Activated CD8-positive, alpha-beta T cell treated with anti-CD3 and anti-CD28 coated beads, Interleukin-2, amount 10 ng/mL, durations not matched to agents 7 days and 5 days (primary cell): ENCODE measurements at regions of chr16 and their contacts with region 1.

Region 1: DNA sequence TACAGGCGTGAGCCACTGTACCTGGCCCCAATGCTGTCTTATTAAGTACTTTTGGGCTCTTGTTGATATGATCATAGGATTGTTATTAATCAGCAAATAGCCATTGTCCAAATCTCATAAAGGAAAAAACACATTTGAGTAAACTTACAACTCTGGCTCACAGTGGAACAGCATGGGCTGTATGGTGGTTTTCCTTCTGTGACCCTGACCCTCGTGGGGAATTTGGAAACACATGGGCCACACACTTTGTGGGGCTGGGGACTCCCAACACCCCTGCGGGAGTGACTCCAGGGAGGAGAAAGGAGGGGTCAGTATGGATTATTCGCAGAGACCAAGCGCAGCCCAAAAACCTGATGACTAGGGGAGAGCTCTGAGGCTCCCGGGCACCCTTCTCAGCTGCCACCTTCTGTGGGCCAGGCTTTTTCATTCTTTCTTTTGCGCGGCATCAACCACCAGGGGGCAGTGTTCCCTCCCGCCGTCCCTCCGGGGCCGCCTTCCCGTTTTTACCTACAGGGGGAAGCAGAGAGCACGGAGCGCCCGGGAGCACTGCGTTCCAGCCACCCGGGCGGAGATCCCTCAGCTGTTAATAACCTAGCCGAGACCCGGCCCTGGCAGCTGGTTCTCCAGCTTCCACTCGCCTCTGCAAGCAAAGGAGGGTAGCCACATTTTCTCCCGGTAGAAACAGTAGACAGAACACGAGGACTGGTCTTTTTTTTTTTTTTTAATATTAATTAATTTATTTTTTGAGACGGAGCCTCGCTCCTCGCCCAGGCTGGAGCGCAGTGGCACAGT is 9.7 kb downstream of the TSNAXIP1 start:
- DNase-seq: peak; percentile 93
- ATAC-seq: peak; percentile 96
- H3K4me3 Mint-ChIP-seq: no peak overlapping the region
- H3K27ac Mint-ChIP-seq: peak overlapping the region; percentile 20
- H3K4me1 Mint-ChIP-seq: peaks cover 7% of the 10 kb centered on the region
- H3K27me3 Mint-ChIP-seq: peaks cover 5% of the 10 kb centered on the region

Region 2: DNA sequence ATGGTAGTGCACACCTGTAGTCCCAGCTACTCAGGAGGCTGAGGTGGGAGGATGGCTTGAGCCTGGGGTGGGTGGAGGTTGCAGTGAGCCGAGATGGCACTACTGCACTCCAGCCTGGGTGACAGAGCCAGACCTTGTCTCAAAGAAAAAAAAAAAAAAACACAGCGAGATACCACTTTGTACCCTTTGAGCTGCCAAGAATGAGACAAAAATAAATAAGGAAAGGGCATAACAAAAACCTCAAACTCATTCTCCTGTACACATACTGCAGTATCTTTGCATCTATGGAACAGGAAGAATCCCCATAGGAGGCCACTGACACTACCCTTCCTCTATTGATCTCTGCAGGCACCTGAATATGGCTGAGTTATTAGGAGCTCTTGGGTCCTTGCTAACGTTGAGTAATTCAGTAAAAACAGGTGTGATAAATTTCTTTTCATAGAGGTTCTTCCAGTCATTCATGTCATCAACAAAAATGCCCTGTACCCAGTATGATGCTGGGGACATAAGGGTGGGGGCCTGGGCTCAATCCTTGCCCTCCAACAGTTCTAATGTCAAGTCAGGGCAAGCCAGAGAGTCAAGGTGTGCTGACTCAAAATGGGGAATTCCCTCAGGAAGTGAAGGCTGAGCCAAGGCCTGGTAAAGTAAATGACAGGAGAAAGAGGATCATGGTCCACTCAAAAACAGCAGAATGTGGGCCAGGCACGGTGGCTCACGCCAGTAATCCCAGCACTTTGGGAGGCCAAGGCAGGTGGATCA is 37.0 kb before region 1 on chr16:
- CTCF ChIA-PET with region 1: interaction called, 10 read pairs
- POLR2A ChIA-PET with region 1: no interaction called
- DNase-seq: no peak
- ATAC-seq: no peak
- H3K4me3 Mint-ChIP-seq: no peak overlapping the region
- H3K27ac Mint-ChIP-seq: peak overlapping the region; percentile 13
- H3K4me1 Mint-ChIP-seq: peaks cover 25% of the 10 kb centered on the region
- H3K27me3 Mint-ChIP-seq: no peaks in the 10 kb centered on the region

Region 3: GRCh38 chr16:67841764-67842508 is 25.5 kb after region 1 on chr16 and contains the start of gene THAP11:
- CTCF ChIA-PET with region 1: interaction called, 40 read pairs
- POLR2A ChIA-PET with region 1: no interaction called
- DNase-seq: peak; percentile 97
- ATAC-seq: peak; percentile 59
- H3K4me3 Mint-ChIP-seq: peak within 1 kb of the TSS; percentile 96
- H3K27ac Mint-ChIP-seq: peak within 1 kb of the TSS; percentile 98
- H3K4me1 Mint-ChIP-seq: peaks cover 38% of the 10 kb centered on the region
- H3K27me3 Mint-ChIP-seq: no peaks in the 10 kb centered on the region
- total RNA-seq, gene THAP11: 50.2 to 52.4 TPM

Region 4: DNA sequence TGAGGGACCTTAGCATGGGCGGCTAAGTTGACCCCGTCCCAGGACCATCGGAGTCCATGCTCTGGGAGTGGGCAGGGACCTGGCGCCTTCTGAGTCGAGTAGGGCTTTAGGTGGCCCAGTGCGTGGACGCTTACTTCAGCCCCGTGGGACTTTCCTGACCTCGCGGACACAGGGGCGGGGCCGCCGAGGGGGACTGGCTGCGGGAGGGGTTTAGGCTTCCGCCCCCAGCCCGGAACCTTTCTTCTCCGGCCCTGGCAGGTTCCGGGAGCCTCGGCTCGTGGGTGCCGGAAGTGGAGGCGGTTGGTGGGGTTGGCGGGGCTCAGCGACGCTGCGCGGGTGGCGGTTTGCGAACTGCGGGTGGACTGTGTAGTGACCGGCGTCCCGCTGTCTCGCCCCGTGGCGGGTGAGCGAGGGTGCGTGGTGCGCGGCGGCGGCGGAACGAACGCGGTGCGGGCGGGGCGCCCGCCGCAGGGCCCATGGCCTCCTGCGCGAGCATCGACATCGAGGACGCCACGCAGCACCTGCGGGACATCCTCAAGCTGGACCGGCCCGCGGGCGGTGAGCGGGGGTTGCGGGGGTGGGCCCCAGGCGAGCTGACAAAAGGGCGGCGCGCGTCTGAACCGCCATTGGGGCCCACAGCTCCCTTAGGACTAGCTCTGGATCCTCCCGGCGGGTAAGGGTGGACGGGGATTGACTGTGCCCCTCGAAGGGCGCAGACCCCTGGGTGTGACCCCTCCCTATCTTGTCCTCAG is 56.5 kb after region 1 on chr16 and contains the start of gene EDC4:
- CTCF ChIA-PET with region 1: interaction called, 16 read pairs
- POLR2A ChIA-PET with region 1: no interaction called
- DNase-seq: peak; percentile 88
- ATAC-seq: peak; percentile 91
- H3K4me3 Mint-ChIP-seq: peak within 1 kb of the TSS; percentile 89
- H3K27ac Mint-ChIP-seq: peak within 1 kb of the TSS; percentile 92
- H3K4me1 Mint-ChIP-seq: peaks cover 31% of the 10 kb centered on the region
- H3K27me3 Mint-ChIP-seq: no peaks in the 10 kb centered on the region
- total RNA-seq, gene EDC4: 111 to 113 TPM

Region 5: GRCh38 chr16:67917852-67918236 is 101.4 kb after region 1 on chr16:
- CTCF ChIA-PET with region 1: interaction called, 21 read pairs
- POLR2A ChIA-PET with region 1: interaction called, 4 read pairs
- DNase-seq: peak; percentile 40
- ATAC-seq: peak; percentile 71
- H3K4me3 Mint-ChIP-seq: no peak overlapping the region
- H3K27ac Mint-ChIP-seq: peak overlapping the region; percentile 53
- H3K4me1 Mint-ChIP-seq: peaks cover 24% of the 10 kb centered on the region
- H3K27me3 Mint-ChIP-seq: no peaks in the 10 kb centered on the region

Region 6: GRCh38 chr16:67935402-67936123 is 119.1 kb after region 1 on chr16:
- CTCF ChIA-PET with region 1: interaction called, 25 read pairs
- POLR2A ChIA-PET with region 1: interaction called, 3 read pairs
- DNase-seq: peak; percentile 98
- ATAC-seq: peak; percentile 85
- H3K4me3 Mint-ChIP-seq: peak overlapping the region; percentile 100
- H3K27ac Mint-ChIP-seq: peak overlapping the region; percentile 99
- H3K4me1 Mint-ChIP-seq: peaks cover 44% of the 10 kb centered on the region
- H3K27me3 Mint-ChIP-seq: no peaks in the 10 kb centered on the region

Region 7: GRCh38 chr16:67993189-67994039 is 177.0 kb after region 1 on chr16:
- CTCF ChIA-PET with region 1: no interaction called
- POLR2A ChIA-PET with region 1: no interaction called
- DNase-seq: peak; percentile 89
- ATAC-seq: peak; percentile 93
- H3K4me3 Mint-ChIP-seq: peak overlapping the region; percentile 78
- H3K27ac Mint-ChIP-seq: peak overlapping the region; percentile 97
- H3K4me1 Mint-ChIP-seq: peaks cover 42% of the 10 kb centered on the region
- H3K27me3 Mint-ChIP-seq: no peaks in the 10 kb centered on the region

Region 8: GRCh38 chr16:68206245-68206644 is 389.8 kb after region 1 on chr16:
- CTCF ChIA-PET with region 1: no interaction called
- POLR2A ChIA-PET with region 1: no interaction called
- DNase-seq: no peak
- ATAC-seq: no peak
- H3K4me3 Mint-ChIP-seq: no peak overlapping the region
- H3K27ac Mint-ChIP-seq: no peak overlapping the region
- H3K4me1 Mint-ChIP-seq: peaks cover 28% of the 10 kb centered on the region
- H3K27me3 Mint-ChIP-seq: no peaks in the 10 kb centered on the region